Endothelial cell of umbilical vein (primary cell): ENCODE measurements at regions of chr6 and their contacts with region 1.

Region 1: GRCh38 chr6:15245361-15246216 is at the start of gene JARID2:
- DNase-seq: peak; percentile 97
- H3K4me3 ChIP-seq: peak within 1 kb of the TSS; percentile 63 to 96 (median 94)
- H3K27ac ChIP-seq: peak within 1 kb of the TSS; percentile 70
- H3K4me1 ChIP-seq: peaks cover 30% of the 10 kb centered on the region
- H3K27me3 ChIP-seq: no peaks in the 10 kb centered on the region
- CTCF ChIP-seq: no peak
- POLR2A ChIP-seq: peak; percentile 34
- total RNA-seq, gene JARID2: 8.8 and 10.6 TPM in 2 replicates

Region 2: DNA sequence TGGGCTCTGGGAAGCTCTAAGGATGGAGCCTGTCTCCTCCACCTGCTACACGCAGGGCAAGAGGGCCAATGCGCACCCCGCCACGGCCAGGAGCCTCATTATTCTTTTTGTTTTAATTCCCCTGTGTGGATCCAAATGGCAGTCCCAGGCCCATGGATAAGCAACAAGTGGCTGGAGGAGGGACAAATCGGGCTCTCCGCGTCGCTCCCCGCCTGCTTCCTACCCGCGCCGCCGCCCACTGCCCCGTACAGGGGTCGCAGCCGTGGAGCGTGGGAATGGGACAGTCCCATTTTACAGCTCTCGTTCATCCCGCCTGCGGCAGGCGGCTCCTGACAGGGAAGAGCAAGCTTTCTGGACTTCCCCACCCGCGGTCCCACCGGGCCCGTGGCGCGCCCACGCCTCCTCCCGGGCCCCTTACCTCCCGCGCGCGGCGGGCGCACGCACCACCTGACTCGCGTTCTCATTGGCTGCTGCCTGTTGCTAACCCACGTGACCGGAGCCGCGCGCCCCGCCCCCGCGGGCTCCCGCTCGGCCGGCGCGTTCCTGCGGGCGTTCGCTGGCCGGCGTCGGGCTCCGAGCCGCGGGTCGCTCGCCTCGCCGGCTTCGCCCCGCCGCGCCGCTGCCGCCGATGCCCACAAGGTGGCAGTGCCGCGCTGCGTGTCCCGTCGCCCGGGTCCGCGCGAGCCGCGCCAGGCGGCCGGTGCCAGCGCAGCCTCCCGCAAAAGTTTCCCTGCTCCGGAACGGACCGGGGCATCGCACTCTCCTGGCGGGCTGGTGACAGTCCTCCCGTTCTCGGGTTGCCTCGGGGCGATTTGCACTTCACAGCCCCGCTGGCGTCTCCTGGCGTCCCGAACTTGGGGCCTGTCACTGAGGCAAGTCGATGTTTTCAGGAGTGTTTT is 1034.7 kb before region 1 on chr6:
- CTCF ChIA-PET with region 1: interaction called, 4 read pairs
- POLR2A ChIA-PET with region 1: no interaction called
- dilution Hi-C with region 1: no loop called
- intact Hi-C with region 1: loop called (anchors 1 kb)
- DNase-seq: peak; percentile 88
- H3K4me3 ChIP-seq: peak overlapping the region; percentile 50 to 70 (median 61)
- H3K27ac ChIP-seq: no peak overlapping the region
- H3K4me1 ChIP-seq: no peaks in the 10 kb centered on the region
- H3K27me3 ChIP-seq: peaks cover 0 to 9% of the 10 kb centered on the region in 2 experiments
- CTCF ChIP-seq: peak; percentile 56 to 76
- POLR2A ChIP-seq: no peak

Region 3: DNA sequence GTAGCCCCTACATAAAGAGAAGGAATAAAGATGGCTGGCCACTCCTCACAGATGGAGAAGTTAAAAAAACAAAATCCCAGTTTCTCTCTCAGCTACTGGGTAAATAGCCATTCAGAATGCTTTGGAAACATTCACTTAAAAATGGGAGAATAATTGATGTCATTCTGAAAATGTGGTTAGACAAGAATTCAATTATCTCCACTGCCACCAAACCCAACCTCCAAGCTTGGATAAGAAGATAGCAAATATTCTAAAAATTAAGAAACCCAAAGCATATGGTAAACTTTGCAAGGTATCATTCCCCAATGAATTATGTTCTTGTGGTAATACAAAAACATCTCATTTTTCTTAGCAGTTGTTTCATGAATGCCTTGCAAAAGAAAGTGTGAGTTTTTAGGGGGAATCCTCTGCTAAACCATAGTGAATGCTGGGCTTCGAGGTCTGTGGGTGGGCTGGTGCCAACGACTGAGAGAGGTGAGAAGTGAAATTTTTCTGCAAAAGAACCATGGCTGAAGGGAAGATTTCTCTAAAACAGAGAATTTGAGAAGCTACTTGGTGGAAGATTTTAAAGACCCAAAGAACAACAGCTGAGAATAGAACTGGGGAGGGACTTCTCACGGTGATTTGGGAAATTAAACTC is 497.6 kb before region 1 on chr6:
- CTCF ChIA-PET with region 1: no interaction called
- POLR2A ChIA-PET with region 1: no interaction called
- dilution Hi-C with region 1: no loop called
- intact Hi-C with region 1: no loop called
- DNase-seq: no peak
- H3K4me3 ChIP-seq: no peak overlapping the region
- H3K27ac ChIP-seq: no peak overlapping the region
- H3K4me1 ChIP-seq: no peaks in the 10 kb centered on the region
- H3K27me3 ChIP-seq: no peaks in the 10 kb centered on the region
- CTCF ChIP-seq: no peak
- POLR2A ChIP-seq: no peak

Region 4: DNA sequence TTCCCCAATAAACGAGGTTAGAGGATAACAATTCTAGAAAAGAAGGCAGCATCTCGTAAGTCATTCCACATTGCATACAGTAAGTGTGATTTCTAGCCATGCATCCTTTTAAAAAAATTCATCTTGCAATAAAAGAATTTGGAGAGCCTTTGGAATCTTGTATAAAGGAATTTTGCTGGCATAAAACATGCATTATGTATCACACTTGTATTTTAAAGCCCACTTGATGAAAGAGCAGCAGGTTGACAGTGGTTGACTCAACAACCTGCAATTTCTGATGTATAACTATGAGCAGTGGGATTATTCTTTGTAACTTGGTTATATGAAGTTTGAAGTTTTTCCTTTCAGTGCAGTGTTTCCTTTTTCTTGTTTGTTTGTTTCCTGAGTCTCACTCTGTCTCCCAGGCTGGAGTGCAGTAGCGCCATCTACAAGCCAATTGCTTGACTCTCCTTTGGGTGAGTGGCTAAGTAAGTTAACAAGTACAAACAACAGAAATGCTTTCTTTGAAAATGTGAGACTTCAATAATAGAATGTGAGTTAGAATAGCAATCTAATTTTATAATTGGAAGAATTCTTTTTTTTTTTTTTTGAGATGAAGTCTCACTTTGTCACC is 40.2 kb after region 1 on chr6:
- CTCF ChIA-PET with region 1: interaction called, 3 read pairs
- POLR2A ChIA-PET with region 1: no interaction called
- dilution Hi-C with region 1: no loop called
- intact Hi-C with region 1: loop called (anchors 1 kb)
- DNase-seq: peak; percentile 37
- H3K4me3 ChIP-seq: no peak overlapping the region
- H3K27ac ChIP-seq: no peak overlapping the region
- H3K4me1 ChIP-seq: peaks cover 18% of the 10 kb centered on the region
- H3K27me3 ChIP-seq: no peaks in the 10 kb centered on the region
- CTCF ChIP-seq: no peak
- POLR2A ChIP-seq: no peak

Region 5: DNA sequence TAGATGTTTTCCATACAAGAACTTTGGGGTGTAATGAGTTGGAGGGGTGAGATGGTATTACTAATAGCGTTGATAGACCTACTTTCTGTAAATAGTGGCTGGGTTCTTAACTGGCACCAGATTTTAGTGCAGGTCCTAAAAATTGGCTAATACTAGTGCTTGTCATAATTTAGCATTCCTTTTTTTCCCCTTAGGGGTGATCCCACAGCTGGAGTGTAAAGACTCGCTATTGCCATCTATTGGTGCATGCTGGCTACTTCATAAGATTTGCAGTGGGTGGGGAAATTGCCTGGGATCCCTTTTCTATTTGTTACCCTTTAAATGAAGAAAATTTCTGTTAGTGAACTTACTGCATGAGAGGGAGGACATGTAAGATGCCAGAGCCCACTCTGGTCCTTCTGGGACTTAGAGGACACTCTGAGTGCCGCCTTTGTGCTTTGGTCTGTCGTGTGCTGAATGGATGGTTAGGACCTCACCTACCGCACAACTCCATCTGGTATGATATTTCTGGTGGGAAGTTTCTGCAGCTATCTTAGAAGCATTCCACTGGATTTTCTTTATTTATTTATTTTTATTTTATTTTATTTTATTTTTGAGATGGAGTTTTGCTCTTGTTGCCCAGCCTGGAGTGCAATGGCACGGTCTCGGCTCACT is 195.8 kb after region 1 on chr6:
- CTCF ChIA-PET with region 1: interaction called, 3 read pairs
- POLR2A ChIA-PET with region 1: no interaction called
- dilution Hi-C with region 1: no loop called
- intact Hi-C with region 1: loop called (anchors 1 kb)
- DNase-seq: peak; percentile 63
- H3K4me3 ChIP-seq: no peak overlapping the region
- H3K27ac ChIP-seq: no peak overlapping the region
- H3K4me1 ChIP-seq: peaks cover 5% of the 10 kb centered on the region
- H3K27me3 ChIP-seq: no peaks in the 10 kb centered on the region
- CTCF ChIP-seq: peak; percentile 73 to 75
- POLR2A ChIP-seq: no peak

Region 6: DNA sequence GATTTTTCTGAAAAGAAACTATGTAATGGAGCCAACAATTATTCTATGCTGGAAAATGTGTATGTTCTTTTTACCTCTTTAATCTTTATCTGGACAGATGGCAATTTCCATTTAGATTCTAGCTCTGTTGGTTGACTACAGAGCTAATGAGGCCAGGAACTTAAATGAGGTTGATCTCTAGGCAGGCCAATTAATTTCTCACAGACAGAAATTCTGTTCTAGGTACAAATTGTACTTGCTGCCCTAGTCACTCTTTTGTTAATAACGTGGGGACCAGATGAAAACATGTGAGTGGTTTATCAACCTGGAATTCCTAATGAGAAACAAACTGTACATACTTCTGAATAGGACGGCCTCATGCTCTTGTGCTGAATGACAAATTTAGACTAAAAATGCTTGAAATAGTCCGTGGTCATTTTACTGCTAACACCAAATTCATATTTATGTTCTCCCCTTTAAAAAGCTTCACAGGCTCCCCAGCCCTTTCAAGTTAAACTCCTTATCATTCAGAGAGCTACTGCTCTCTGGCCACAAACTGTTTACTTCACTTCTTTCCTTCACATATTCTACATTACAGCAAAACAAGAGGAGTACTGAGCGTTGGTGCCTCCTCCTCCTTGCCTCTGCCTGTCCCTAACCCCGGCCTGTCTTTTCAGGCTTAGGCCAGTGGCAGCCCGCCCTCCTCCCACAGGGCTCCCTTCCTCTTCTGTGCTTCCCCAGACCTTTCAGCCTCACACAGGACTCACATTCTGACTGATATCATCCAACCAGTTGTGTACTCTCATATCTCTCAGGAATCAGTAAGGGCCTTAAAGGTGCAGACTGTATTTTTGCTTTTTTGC is 375.8 kb after region 1 on chr6:
- CTCF ChIA-PET with region 1: interaction called, 4 read pairs
- POLR2A ChIA-PET with region 1: no interaction called
- dilution Hi-C with region 1: no loop called
- intact Hi-C with region 1: loop called (anchors 5 kb)
- DNase-seq: peak; percentile 20
- H3K4me3 ChIP-seq: no peak overlapping the region
- H3K27ac ChIP-seq: no peak overlapping the region
- H3K4me1 ChIP-seq: no peaks in the 10 kb centered on the region
- H3K27me3 ChIP-seq: no peaks in the 10 kb centered on the region
- CTCF ChIP-seq: no peak
- POLR2A ChIP-seq: no peak